Psoas muscle (tissue), 8 donors: ENCODE measurements at regions of chr4 and their contacts with region 1.

Region 1: DNA sequence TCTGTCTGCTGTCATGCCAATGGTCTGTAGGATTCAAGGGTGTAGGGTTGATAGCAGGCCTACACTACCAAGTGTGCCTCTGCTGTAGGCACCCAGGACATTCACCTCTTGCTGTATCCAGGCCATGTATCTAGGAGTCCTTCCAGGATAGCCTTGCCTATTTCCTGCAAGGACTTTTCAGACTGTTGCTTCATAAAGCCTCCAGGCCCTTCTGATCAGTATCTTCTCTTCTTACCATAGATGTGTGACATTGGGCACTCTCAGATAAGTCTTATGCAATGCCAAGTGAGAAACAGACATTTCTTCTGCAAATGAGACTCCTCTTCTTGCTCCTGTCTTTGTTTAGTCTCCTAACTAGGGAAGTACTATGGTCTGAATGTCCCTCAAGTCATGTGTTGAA is 386.9 kb downstream of the ANKRD50 start:
- DNase-seq: no peak
- ATAC-seq: no peak
- H3K4me3 ChIP-seq: no peak overlapping the region
- H3K27ac ChIP-seq: no peak overlapping the region
- H3K4me1 ChIP-seq: peaks cover 4% of the 10 kb centered on the region
- H3K27me3 ChIP-seq: no peaks in the 10 kb centered on the region
- CTCF ChIP-seq: no peak

Region 2: GRCh38 chr4:124288706-124289483 is 36.8 kb before region 1 on chr4:
- intact Hi-C with region 1: no loop called
- DNase-seq: no peak
- ATAC-seq: no peak
- H3K4me3 ChIP-seq: no peak overlapping the region
- H3K27ac ChIP-seq: no peak overlapping the region
- H3K4me1 ChIP-seq: no peaks in the 10 kb centered on the region
- H3K27me3 ChIP-seq: no peaks in the 10 kb centered on the region
- CTCF ChIP-seq: no peak

Region 3: GRCh38 chr4:124768596-124769365 is 443.1 kb after region 1 on chr4:
- intact Hi-C with region 1: no loop called
- DNase-seq: no peak
- ATAC-seq: no peak
- H3K4me3 ChIP-seq: no peak overlapping the region
- H3K27ac ChIP-seq: no peak overlapping the region
- H3K4me1 ChIP-seq: no peaks in the 10 kb centered on the region
- H3K27me3 ChIP-seq: no peaks in the 10 kb centered on the region
- CTCF ChIP-seq: no peak

Region 4: GRCh38 chr4:125244848-125245450 is 919.3 kb after region 1 on chr4:
- intact Hi-C with region 1: loop called in 1 of 2 experiments (anchors 5 kb)
- DNase-seq: no peak
- ATAC-seq: no peak
- H3K4me3 ChIP-seq: no peak overlapping the region
- H3K27ac ChIP-seq: no peak overlapping the region
- H3K4me1 ChIP-seq: no peaks in the 10 kb centered on the region
- H3K27me3 ChIP-seq: no peaks in the 10 kb centered on the region
- CTCF ChIP-seq: peak; percentile 57